Activated CD8-positive, alpha-beta T cell treated with anti-CD3 and anti-CD28 coated beads for 36 hours (primary cell): ENCODE measurements at regions of chr7 and their contacts with region 1.

Region 1: DNA sequence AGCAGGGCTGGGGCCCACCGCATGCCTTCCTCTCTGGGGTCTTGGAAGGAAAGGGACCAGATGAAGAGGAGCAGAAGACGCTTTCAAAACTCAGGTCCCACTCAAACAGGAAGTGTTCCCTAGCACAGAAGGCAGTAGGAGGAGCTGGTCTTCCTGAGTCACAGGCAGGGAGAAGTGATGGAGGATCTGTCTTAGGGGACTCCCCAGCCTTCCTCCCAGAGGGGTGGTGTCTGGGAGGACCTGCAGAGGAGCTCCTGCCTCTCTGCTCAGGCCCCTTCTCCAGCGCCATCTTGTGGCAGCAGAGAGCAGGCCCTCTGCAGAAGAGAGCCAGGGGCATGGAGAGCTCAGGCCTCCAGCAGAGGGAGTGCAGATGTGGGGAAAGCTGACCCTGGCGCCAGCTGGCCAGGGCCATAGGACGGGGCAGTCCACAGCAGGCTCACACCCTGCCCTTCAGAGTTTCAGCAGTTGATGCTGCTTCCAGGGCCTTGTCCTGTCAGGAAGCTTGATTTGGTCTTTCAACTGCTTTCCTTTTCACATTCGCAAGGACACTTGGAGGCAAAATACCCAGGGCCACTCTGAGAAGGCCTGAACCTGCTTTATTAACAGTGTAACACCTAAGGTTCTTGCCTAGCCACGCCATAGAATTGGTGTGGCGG is 62.2 kb upstream of the TARP start:
- DNase-seq: peak; percentile 88
- ATAC-seq: peak; percentile 88
- H3K4me3 Mint-ChIP-seq: peak overlapping the region; percentile 71
- H3K27ac Mint-ChIP-seq: peak overlapping the region; percentile 88
- H3K4me1 Mint-ChIP-seq: peaks cover 44% of the 10 kb centered on the region
- H3K27me3 Mint-ChIP-seq: no peaks in the 10 kb centered on the region
- CTCF ChIP-seq: peak; percentile 86

Region 2: DNA sequence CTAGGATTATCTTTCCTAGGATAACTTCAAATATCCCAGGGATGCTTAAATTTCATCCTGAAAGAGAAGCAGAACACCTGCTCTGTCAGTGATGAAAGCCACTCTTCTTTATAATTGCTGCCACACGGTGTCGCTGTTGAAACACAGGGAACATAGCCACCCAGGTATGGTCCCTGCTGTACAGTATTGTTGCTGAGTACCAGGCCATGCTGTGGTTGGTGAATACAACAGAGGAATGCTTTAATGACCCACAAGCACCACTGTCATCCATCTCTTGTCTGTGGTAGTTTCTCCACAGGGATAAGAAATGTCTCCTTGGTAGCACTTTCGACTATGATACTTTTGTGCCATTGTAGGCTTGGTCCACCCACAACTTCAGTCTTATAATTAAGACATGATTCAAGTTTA is 228.1 kb before region 1 on chr7:
- CTCF ChIA-PET with region 1: interaction called, 13 read pairs
- POLR2A ChIA-PET with region 1: no interaction called
- intact Hi-C with region 1: no loop called
- DNase-seq: peak; percentile 84
- ATAC-seq: peak; percentile 87
- H3K4me3 Mint-ChIP-seq: no peak overlapping the region
- H3K27ac Mint-ChIP-seq: no peak overlapping the region
- H3K4me1 Mint-ChIP-seq: peaks cover 2% of the 10 kb centered on the region
- H3K27me3 Mint-ChIP-seq: peaks cover 8% of the 10 kb centered on the region
- CTCF ChIP-seq: peak; percentile 86

Region 3: GRCh38 chr7:38232502-38233366 is 102.9 kb before region 1 on chr7:
- CTCF ChIA-PET with region 1: interaction called, 16 read pairs
- POLR2A ChIA-PET with region 1: no interaction called
- intact Hi-C with region 1: no loop called
- DNase-seq: peak; percentile 94
- ATAC-seq: peak; percentile 89
- H3K4me3 Mint-ChIP-seq: peak overlapping the region; percentile 43
- H3K27ac Mint-ChIP-seq: peak overlapping the region; percentile 90
- H3K4me1 Mint-ChIP-seq: peaks cover 77% of the 10 kb centered on the region
- H3K27me3 Mint-ChIP-seq: no peaks in the 10 kb centered on the region
- CTCF ChIP-seq: no peak

Region 4: DNA sequence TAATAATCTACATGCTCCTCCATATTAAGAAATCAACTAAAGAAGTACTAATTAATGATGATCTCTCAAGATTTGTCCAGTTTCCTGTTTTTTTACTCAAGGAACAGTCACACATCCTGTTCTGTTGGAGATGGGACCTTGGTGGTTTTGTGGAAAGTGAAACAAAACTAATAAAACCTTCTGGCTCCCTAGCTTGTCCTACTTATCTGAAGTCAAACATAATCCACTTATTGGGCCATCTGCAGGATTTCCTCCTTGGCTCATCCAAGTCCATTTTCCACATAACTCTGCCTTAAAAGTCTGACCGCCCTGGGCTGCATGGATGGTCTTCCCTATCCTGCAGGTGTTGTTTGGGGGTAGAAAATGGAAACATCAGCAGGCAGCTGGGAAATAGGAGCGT is 22.8 kb before region 1 on chr7:
- CTCF ChIA-PET with region 1: interaction called, 67 read pairs
- POLR2A ChIA-PET with region 1: interaction called, 4 read pairs
- intact Hi-C with region 1: no loop called
- DNase-seq: no peak
- ATAC-seq: no peak
- H3K4me3 Mint-ChIP-seq: peak overlapping the region; percentile 46
- H3K27ac Mint-ChIP-seq: peak overlapping the region; percentile 69
- H3K4me1 Mint-ChIP-seq: peaks cover 38% of the 10 kb centered on the region
- H3K27me3 Mint-ChIP-seq: no peaks in the 10 kb centered on the region
- CTCF ChIP-seq: no peak

Region 5: GRCh38 chr7:38318803-38319416 is 16.7 kb before region 1 on chr7:
- CTCF ChIA-PET with region 1: interaction called, 67 read pairs
- POLR2A ChIA-PET with region 1: no interaction called
- intact Hi-C with region 1: no loop called
- DNase-seq: peak; percentile 46
- ATAC-seq: peak; percentile 66
- H3K4me3 Mint-ChIP-seq: peak overlapping the region; percentile 66
- H3K27ac Mint-ChIP-seq: peak overlapping the region; percentile 86
- H3K4me1 Mint-ChIP-seq: peaks cover 58% of the 10 kb centered on the region
- H3K27me3 Mint-ChIP-seq: no peaks in the 10 kb centered on the region
- CTCF ChIP-seq: peak; percentile 49

Region 6: DNA sequence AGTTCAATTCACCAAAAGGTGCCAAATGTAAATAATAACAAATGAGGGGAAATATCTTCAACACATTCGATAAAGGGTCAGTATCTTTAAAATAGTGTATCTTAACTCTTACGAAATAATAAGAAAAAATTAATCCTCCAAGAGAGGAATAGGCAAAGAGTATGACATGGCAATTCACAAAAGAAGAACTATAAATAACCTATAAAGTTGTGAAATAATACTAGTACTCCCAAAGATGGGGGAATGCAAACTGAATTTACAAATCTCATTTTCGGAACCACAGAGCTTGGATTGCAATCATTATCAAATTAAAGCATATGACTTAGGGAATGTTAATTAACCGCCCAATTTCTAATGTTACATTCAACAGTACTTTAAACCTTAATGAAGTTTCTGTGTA is 16.0 kb after region 1 on chr7:
- CTCF ChIA-PET with region 1: interaction called, 63 read pairs
- POLR2A ChIA-PET with region 1: interaction called, 5 read pairs
- intact Hi-C with region 1: no loop called
- DNase-seq: no peak
- ATAC-seq: no peak
- H3K4me3 Mint-ChIP-seq: peak overlapping the region; percentile 96
- H3K27ac Mint-ChIP-seq: peak overlapping the region; percentile 96
- H3K4me1 Mint-ChIP-seq: peaks cover 40% of the 10 kb centered on the region
- H3K27me3 Mint-ChIP-seq: no peaks in the 10 kb centered on the region
- CTCF ChIP-seq: no peak

Region 7: DNA sequence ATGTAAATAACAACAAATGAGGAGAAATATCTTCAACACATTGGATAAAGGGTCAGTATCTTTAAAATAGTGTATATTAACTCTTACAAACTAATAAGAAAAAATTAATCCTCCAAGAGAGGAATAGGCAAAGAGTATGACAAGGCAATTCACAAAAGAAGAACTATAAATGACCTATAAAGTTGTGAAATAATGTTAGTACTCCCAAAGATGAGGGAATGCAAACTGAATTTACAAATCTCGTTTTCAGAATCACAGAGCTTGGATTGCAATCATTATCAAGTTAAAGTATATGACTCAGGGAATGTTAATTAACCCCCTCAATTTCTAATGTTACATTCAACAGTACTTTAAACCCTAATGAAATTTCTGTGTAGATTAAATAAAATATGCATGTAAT is 25.2 kb after region 1 on chr7:
- CTCF ChIA-PET with region 1: interaction called, 72 read pairs
- POLR2A ChIA-PET with region 1: interaction called, 3 read pairs
- intact Hi-C with region 1: no loop called
- DNase-seq: no peak
- ATAC-seq: no peak
- H3K4me3 Mint-ChIP-seq: peak overlapping the region; percentile 97
- H3K27ac Mint-ChIP-seq: peak overlapping the region; percentile 95
- H3K4me1 Mint-ChIP-seq: peaks cover 62% of the 10 kb centered on the region
- H3K27me3 Mint-ChIP-seq: no peaks in the 10 kb centered on the region
- CTCF ChIP-seq: no peak